Left cardiac atrium (tissue), 4 donors: ENCODE measurements at regions of chr18 and their contacts with region 1.

Region 1: GRCh38 chr18:61893971-61894750 is 1.4 kb upstream of the RNF152 start:
- DNase-seq: peak; percentile 82
- ATAC-seq: peak; percentile 91 to 92

Region 2: GRCh38 chr18:61551586-61551985 is 342.6 kb before region 1 on chr18:
- intact Hi-C with region 1: loop called in 1 of 2 experiments (anchors 2 kb)
- DNase-seq: no peak
- ATAC-seq: peak; percentile 70 to 82

Region 3: DNA sequence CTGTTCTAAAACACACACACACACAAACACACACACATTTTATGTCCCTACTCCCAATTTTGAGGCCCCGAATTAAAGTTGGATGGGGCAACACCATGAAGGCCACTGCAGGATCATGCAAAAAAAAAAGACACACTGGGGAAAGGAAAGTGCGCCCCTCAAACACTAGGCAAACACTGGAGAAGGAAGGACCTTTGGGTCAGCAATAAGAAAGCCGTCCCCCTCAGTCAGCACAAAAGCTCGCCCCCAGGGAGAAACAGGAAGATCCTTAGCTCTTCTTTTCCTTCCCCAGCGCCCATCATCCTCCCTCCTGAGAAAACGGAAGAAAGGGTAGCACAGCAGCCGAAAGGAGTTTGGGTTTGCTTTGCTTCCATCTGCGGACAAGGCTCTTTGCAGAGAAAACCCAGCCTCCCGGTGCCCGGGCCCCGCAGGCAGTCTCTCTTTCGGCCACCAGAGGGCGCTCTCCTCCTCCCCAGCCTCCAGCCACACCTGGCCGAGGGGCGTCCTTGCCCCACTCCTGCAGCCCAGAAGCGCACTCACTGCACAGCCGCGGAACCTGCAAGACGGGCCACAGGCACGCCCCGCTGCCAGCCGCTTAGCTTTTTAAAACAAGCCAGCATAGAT is 312.5 kb before region 1 on chr18:
- intact Hi-C with region 1: loop called in 1 of 2 experiments (anchors 5 kb)
- DNase-seq: peak; percentile 79
- ATAC-seq: peak; percentile 88 to 96

Region 4: DNA sequence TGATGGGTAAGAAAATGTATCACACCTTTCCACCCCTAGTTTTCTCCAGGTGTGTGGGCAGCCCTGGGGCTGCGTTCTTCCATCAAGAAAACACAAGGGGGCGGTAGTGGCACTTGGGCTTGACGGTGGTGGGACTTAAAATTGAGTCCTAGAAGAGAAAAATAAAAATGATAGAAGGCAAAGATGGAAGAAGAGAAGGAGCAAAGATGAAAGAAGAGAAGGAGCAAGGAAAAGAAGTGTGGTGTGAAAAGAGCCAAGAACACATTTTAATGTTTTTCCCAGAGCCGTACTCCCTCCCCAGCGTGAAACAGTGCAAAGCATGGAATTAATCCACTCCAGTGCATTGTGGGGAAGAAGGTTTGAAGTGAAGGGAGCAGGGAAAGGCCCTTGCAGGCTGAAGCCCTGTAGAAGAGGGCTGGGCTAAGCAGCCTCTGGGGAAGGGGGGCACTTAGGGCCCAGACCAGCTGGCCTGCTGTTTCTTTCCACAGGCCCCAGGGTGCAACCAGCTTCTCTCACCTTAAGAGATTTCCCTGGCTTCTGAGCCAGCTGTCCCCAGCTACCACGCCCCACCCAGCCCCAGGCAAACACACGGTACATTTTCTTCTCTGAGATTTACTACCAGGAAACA is 258.1 kb before region 1 on chr18:
- intact Hi-C with region 1: loop called in 1 of 2 experiments (anchors 5 kb)
- DNase-seq: peak; percentile 44
- ATAC-seq: peak; percentile 82 to 88

Region 5: DNA sequence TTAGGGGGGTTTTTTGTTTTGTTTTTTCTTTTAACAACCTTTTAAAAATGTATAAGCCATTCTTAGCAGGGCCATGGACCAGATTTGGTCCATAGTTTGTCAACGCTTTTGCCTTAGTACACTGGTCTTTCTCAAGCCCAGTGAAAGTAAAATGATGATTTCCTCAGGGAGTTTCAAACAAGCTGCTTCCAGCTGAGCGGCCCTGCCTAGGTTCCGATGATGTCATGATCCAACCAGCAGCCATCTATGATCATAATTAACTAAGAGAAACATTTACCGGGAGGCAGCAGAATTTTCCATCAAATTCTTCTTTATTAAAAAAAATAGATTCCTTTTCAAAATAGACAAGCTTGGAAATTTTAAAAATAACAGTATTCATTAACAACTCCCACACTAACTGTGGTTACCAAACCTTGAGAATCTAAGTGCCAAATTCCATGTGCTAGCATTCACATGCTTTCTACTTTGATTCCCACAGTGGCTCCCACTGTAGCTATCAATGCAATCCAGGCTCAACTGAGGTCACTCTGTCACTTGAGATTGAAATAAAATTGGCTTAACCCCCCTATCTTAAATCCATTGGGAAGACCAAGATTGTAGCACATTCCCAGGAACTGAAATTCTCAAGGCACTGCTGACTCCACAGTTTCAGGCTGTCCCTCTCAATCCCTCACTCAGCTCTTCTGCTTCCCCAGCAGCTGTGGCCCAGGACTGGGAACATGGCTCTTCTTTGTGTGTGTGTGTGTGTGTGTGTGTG is 150.2 kb before region 1 on chr18:
- intact Hi-C with region 1: loop called (anchors 10 kb)
- DNase-seq: peak; percentile 49
- ATAC-seq: peak; percentile 64 to 79

Region 6: DNA sequence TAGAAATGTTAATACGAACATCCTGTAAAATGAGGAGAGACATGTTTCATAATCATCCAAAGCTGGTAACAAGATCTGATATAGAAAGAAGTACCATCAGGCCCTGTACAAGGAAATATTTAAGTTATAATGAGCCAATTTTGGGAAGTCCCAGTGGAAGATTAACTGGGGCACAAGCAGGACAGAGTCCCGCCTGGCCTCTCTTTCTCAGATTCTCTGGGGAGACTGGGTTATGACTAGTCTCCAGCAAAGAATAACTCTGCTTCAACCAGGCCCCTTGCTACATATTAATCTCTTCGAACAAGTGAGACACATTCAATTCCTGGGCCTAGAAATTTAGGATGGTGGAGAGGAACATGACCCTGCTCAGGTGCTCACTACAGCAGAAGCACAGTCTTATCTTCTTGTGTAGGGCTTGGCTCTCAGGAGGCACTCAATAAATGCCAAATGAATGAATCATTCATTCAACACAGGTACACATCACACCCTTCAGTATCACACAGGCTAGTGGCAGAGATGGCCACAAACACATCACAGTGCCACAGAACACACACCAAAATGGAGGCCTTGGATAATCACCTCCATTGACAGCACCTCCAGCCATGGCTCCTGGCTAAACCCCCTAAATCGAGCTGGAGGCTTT is 45.0 kb after region 1 on chr18:
- intact Hi-C with region 1: no loop called
- DNase-seq: no peak
- ATAC-seq: no peak

Region 7: DNA sequence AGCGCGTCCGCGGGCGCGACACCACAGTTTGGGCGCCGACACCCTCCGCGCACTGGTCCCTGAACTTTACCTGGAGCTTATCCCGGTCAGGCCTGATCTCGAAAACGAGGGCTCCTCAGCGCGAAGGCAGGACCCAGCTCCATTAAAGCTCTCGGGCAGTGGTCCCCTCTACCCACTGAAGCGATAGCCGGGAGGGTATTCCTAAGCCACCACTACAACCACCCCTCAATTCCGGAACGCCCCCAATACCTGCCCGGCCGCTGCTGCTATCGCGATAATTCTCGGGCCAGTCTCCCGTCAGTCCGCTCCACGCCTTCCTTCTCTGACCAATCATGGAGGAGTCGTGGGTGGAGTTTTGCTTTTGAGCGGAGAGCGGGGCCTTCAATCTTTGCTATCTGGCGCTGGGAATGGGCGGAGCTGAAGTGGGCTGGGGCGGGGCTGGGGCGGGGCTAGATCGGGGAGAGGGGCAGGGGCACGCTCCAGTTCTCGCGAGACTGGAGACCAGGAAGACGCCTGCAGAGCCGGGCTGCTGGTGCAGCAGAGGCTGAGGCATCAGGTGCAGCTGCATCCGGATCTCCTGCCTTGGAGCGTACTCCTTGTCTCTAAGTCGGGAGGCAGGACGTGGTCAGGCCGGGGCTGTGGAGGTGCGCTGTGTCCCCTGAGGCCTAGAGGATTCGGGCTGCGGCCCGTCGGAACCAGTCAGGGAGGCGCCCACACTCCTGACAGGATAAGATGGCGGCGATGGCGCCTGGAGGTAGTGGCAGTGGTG is 292.8 kb after region 1 on chr18 and contains the starts of genes PIGN and RELCH:
- intact Hi-C with region 1: no loop called
- DNase-seq: peak; percentile 95
- ATAC-seq: peak; percentile 99
- total RNA-seq, gene PIGN: 18.2 to 19.4 TPM
- total RNA-seq, gene RELCH: 14.7 to 14.8 TPM